GM12878 (cell line): ENCODE measurements at regions of chr6 and their contacts with region 1.

Region 1: DNA sequence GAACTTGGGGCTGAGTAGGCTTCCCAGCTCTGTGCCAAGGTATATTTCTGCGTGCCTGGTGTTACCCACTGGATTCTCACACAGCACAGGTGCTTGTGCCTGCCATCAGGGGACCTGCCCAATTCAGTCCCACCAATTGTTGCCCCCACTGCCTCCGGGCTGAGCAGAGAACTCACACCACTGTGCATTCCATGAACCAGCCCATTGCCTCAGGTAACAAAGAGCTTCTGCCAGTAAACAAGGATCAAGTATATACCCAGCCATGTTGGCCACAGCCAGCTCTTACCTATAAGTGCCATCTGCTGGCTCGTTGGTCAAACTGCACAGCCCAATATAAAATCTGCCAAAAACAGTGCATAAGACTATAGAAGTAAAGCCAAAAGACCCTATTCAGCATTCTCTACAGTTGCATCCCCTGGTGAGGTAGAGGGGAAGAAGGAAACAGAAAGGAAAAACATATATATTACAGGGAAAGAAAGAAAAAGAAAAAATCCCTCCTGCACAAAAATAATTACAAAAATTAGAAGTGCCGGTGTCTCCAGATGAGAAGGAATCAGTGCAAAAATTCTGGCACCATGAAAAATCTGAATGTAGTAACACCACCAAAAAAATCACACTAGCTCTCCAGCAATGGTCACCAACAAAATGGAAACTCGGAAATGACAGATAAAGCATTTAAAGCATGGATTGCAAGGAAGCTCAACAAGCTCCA is 241.4 kb downstream of the IBTK start:
- DNase-seq: no peak
- ATAC-seq: peak; percentile 95
- H3K4me3 ChIP-seq: no peak overlapping the region
- H3K27ac ChIP-seq: no peak overlapping the region
- H3K4me1 ChIP-seq: no peaks in the 10 kb centered on the region
- H3K27me3 ChIP-seq: no peaks in the 10 kb centered on the region
- CTCF ChIP-seq: peak; percentile 55 to 62 (median 60)
- EP300 ChIP-seq: no peak
- POLR2A ChIP-seq: no peak
- RAD21 ChIP-seq: peak; percentile 80

Region 2: GRCh38 chr6:80214436-80215022 is 1791.7 kb before region 1 on chr6:
- CTCF ChIA-PET with region 1: no interaction called
- POLR2A ChIA-PET with region 1: no interaction called
- RAD21 ChIA-PET with region 1: no interaction called
- SMC1A ChIA-PET with region 1: no interaction called
- in situ Hi-C with region 1: loop called (anchors 25 kb)
- intact Hi-C with region 1: loop called (anchors 10 kb)
- DNase-seq: no peak
- ATAC-seq: peak; percentile 94
- H3K4me3 ChIP-seq: no peak overlapping the region
- H3K27ac ChIP-seq: no peak overlapping the region
- H3K4me1 ChIP-seq: peaks cover 3% of the 10 kb centered on the region
- H3K27me3 ChIP-seq: no peaks in the 10 kb centered on the region
- CTCF ChIP-seq: peak; percentile 70 to 74 (median 72)
- EP300 ChIP-seq: no peak
- POLR2A ChIP-seq: no peak
- RAD21 ChIP-seq: peak; percentile 82

Region 3: DNA sequence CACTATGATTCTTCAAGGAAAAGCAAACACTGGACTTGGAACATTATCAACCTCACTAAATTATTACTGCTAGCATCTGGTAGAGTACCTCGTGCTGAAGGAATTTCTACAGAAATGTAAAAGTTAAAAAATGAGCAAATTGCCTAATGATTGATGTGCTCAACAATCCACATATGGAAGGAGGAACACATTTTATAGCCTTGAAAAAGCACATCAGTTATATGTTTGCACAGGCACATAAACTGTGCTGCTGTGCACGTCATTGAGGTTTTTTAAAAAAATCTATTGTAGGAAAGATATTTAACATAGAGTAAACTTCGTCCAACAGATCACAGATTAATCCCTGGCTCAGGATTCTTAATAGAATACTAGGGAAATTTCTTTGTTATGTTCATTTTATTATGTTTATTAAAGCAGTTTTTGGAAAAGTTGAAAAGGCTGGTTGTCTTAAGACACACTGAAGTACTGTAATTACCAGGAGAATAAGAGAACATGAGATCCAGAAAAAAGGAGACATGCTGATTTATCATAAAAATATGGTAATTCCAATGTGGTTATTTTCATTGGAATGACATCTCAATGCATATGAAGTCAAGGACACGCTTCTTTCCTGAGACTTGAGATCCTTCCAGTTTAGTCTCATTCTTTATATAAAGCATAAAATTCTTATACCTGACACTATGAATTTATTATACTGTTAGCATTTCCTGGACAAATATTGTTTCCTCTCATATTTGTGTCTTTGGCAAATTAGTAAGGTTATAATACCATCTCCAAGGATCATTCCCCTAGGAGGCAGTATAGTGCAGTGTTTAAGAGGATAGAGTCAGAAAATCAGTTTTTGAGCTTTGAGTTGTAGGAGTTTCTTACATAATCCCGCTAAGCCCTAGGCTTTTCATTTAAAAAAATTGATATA is 764.8 kb before region 1 on chr6:
- CTCF ChIA-PET with region 1: interaction called, 10 read pairs
- POLR2A ChIA-PET with region 1: no interaction called
- RAD21 ChIA-PET with region 1: interaction called, 10 read pairs
- SMC1A ChIA-PET with region 1: interaction called, 7 read pairs
- in situ Hi-C with region 1: no loop called
- intact Hi-C with region 1: no loop called
- DNase-seq: no peak
- ATAC-seq: no peak
- H3K4me3 ChIP-seq: no peak overlapping the region
- H3K27ac ChIP-seq: no peak overlapping the region
- H3K4me1 ChIP-seq: no peaks in the 10 kb centered on the region
- H3K27me3 ChIP-seq: no peaks in the 10 kb centered on the region
- CTCF ChIP-seq: peak in 2 of 3 experiments; percentile 5 to 30; a peak in 1 of 6 replicates
- EP300 ChIP-seq: no peak
- POLR2A ChIP-seq: no peak
- RAD21 ChIP-seq: peak; percentile 37

Region 4: GRCh38 chr6:81743649-81744048 is 262.5 kb before region 1 on chr6:
- CTCF ChIA-PET with region 1: interaction called, 3 read pairs
- POLR2A ChIA-PET with region 1: no interaction called
- RAD21 ChIA-PET with region 1: interaction called, 9 read pairs
- SMC1A ChIA-PET with region 1: interaction called, 10 read pairs
- in situ Hi-C with region 1: no loop called
- intact Hi-C with region 1: no loop called
- DNase-seq: no peak
- ATAC-seq: no peak
- H3K4me3 ChIP-seq: no peak overlapping the region
- H3K27ac ChIP-seq: no peak overlapping the region
- H3K4me1 ChIP-seq: no peaks in the 10 kb centered on the region
- H3K27me3 ChIP-seq: no peaks in the 10 kb centered on the region
- CTCF ChIP-seq: no peak
- EP300 ChIP-seq: no peak
- POLR2A ChIP-seq: no peak
- RAD21 ChIP-seq: no peak

Region 5: DNA sequence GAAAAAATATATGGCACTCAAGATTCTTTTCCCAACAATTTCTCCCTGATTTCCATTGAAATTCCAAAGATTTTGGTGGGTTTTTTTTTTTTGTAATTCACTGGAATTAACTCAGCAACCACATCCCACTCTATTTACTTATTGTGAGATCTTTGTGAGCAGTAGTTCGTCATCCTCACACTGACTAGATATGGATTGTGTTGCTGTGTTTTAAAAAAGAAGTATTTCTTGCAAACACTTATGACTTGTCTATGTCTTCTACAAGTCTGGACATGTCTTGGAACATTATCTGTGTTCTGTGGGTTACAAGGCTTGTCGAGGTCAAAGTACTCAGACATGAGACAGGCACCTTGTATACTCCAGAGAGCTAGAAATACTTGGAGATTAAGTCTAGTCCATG is 246.4 kb before region 1 on chr6:
- CTCF ChIA-PET with region 1: interaction called, 24 read pairs
- POLR2A ChIA-PET with region 1: no interaction called
- RAD21 ChIA-PET with region 1: interaction called, 16 read pairs
- SMC1A ChIA-PET with region 1: interaction called, 25 read pairs
- in situ Hi-C with region 1: no loop called
- intact Hi-C with region 1: loop called (anchors 5 kb)
- DNase-seq: no peak
- ATAC-seq: peak; percentile 66
- H3K4me3 ChIP-seq: no peak overlapping the region
- H3K27ac ChIP-seq: no peak overlapping the region
- H3K4me1 ChIP-seq: no peaks in the 10 kb centered on the region
- H3K27me3 ChIP-seq: no peaks in the 10 kb centered on the region; a peak in 1 of 4 replicates
- CTCF ChIP-seq: no peak
- EP300 ChIP-seq: no peak
- POLR2A ChIP-seq: no peak
- RAD21 ChIP-seq: no peak

Region 6: GRCh38 chr6:81800666-81801065 is 205.5 kb before region 1 on chr6:
- CTCF ChIA-PET with region 1: no interaction called
- POLR2A ChIA-PET with region 1: no interaction called
- RAD21 ChIA-PET with region 1: no interaction called
- SMC1A ChIA-PET with region 1: no interaction called
- in situ Hi-C with region 1: no loop called
- intact Hi-C with region 1: no loop called
- DNase-seq: no peak
- ATAC-seq: no peak
- H3K4me3 ChIP-seq: no peak overlapping the region
- H3K27ac ChIP-seq: no peak overlapping the region
- H3K4me1 ChIP-seq: no peaks in the 10 kb centered on the region
- H3K27me3 ChIP-seq: no peaks in the 10 kb centered on the region
- CTCF ChIP-seq: no peak
- EP300 ChIP-seq: no peak
- POLR2A ChIP-seq: no peak
- RAD21 ChIP-seq: no peak

Region 7: DNA sequence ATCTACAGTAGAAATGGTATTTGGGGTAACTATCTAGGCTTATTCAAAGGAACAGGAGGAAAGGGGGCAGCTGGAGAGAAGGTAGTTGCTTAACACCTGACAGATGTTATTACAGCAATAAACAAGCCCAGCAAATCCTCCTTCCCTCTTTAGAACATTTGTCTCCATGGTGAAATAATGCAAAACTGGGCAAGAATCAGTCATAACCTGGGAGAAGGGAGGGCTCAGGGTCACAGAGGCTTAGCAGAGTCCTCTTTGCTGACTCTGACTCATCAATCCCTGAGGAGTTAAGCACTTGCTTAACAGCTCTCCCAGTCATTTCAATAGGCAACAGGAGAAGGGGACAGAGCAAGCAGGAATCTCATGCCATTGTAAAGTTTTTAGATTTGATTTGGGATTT is 11.1 kb after region 1 on chr6:
- CTCF ChIA-PET with region 1: interaction called, 15 read pairs
- POLR2A ChIA-PET with region 1: no interaction called
- RAD21 ChIA-PET with region 1: interaction called, 3 read pairs
- SMC1A ChIA-PET with region 1: no interaction called
- in situ Hi-C with region 1: no loop called
- intact Hi-C with region 1: no loop called
- DNase-seq: no peak
- ATAC-seq: no peak
- H3K4me3 ChIP-seq: no peak overlapping the region
- H3K27ac ChIP-seq: no peak overlapping the region
- H3K4me1 ChIP-seq: no peaks in the 10 kb centered on the region
- H3K27me3 ChIP-seq: no peaks in the 10 kb centered on the region; a peak in 1 of 4 replicates
- CTCF ChIP-seq: no peak
- EP300 ChIP-seq: no peak
- POLR2A ChIP-seq: no peak
- RAD21 ChIP-seq: no peak

Region 8: DNA sequence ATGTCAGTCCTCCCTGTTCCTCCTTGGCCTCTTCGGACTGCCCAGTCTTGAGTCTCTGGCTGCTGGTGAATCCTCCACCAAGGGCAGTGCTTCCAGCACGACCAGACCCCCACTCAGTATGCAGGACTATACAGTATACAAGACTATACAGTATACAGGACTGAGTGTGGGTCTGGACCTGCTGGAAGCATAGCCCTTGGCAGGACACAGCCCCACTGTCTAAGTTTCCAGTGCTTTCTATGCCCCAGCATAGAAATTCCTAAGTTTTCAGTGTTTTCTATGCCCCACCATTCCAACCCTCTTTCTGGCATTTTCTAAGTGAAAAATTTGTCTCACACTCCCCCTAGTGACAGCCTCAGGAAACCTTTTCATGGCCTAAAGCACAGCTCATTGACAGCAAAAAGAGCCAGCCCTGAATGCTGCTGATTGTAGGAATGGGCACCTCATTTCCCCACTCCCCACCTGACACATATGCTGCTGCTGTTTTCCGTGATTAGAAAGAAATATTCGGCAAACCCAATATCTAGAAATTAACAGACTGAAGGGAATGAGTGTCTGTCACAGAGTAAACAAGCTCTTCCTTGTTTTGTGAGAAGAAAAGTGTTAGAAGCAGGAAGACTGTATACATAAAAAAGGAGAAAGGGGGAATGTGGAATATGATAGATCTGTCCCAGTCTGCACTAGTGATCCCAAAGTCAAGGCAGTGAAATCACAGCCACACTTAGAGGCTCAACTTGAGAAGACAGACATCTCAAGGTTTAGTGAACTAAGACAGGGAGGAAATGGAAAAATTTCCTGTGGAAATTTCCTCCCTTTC is 34.4 kb after region 1 on chr6:
- CTCF ChIA-PET with region 1: interaction called, 22 read pairs
- POLR2A ChIA-PET with region 1: no interaction called
- RAD21 ChIA-PET with region 1: interaction called, 6 read pairs
- SMC1A ChIA-PET with region 1: interaction called, 8 read pairs
- in situ Hi-C with region 1: no loop called
- intact Hi-C with region 1: no loop called
- DNase-seq: peak; percentile 7
- ATAC-seq: peak; percentile 87
- H3K4me3 ChIP-seq: no peak overlapping the region
- H3K27ac ChIP-seq: no peak overlapping the region
- H3K4me1 ChIP-seq: no peaks in the 10 kb centered on the region
- H3K27me3 ChIP-seq: no peaks in the 10 kb centered on the region
- CTCF ChIP-seq: peak; percentile 73 to 85 (median 80)
- EP300 ChIP-seq: no peak
- POLR2A ChIP-seq: no peak
- RAD21 ChIP-seq: peak; percentile 74